Gastrocnemius medialis (tissue), 4 donors: ENCODE measurements at regions of chr2 and their contacts with region 1.

Region 1: DNA sequence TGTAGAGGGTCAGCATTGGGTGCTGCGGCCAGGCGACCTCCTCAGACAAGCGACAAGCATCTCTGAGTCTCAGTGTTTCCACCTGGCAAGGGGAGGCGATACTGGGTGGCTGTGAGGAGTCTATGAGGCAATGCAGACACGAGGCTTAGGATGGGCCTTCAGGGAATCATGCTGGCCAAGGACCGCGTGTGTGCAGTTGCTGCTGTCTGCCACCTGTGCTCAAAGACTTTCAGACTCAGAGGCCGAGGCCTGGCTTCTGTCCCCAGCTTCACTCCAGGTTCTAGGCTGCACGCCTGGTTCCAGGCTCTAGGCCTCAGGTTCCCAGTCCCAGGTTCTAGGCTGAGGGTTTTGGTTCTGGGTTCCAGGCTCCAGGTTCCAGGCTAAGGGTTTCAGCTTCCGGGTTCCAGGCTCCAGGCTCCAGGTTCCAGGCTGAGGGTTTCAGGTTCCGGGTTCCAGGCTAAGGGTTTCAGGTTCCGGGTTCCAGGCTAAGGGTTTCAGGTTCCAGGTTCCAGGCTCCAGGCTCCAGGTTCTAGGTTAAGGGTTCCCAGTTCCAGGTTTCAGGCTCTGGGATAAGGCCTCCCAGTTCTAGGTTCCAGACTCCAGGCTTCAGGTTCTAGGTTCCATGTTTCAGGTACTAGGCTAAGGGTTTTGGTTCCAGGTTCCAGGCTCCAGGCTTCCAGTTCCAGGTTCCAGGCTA is 14.8 kb downstream of the LRRFIP1 start:
- DNase-seq: peak; percentile 79 to 94
- ATAC-seq: peak; percentile 48 to 50
- H3K4me3 ChIP-seq: no peak overlapping the region
- H3K27ac ChIP-seq: peak overlapping the region; percentile 88 to 96 (median 94)
- H3K4me1 ChIP-seq: peaks cover 77 to 89% of the 10 kb centered on the region in 2 donors
- H3K27me3 ChIP-seq: no peaks in the 10 kb centered on the region
- CTCF ChIP-seq: no peak
- POLR2A ChIP-seq: peak in 1 of 2 donors; percentile 26

Region 2: GRCh38 chr2:237629739-237630138 is 12.4 kb before region 1 on chr2:
- in situ Hi-C with region 1: no loop called
- intact Hi-C with region 1: loop called (anchors 1 kb)
- DNase-seq: peak in 1 of 2 donors; percentile 77
- ATAC-seq: peak; percentile 76 to 79
- H3K4me3 ChIP-seq: no peak overlapping the region
- H3K27ac ChIP-seq: peak overlapping the region; percentile 84 to 88 (median 86)
- H3K4me1 ChIP-seq: peaks cover 59 to 71% of the 10 kb centered on the region in 2 donors
- H3K27me3 ChIP-seq: no peaks in the 10 kb centered on the region
- CTCF ChIP-seq: no peak
- POLR2A ChIP-seq: no peak